ENCODE measurements at regions of chrX and their contacts with region 1.

Region 1: DNA sequence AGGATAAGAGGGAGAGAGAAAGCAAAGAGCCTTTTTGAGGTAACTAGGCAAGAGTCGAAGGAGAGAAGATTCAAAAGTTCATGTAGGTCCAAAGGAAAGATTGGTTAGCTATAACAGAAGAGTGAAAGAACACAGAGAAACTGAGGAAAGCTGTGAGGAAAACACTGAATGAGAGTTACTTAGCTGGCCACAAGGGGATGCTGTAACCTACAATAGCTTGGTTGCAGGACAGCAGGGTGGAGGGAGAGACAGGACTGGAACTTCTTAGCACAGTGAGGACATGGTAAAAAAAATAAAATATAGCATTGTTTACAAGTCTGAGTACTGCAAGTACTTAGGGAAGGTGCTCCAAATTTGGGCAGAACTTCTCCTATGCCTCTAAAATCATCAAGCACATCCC is 48.3 kb downstream of the RAI2 start:
- DNase-seq: no peak
- ATAC-seq: peak; percentile 59; the same call in 1 of the 2 replicates
- H3K4me3 Mint-ChIP-seq: no peak overlapping the region
- H3K27ac Mint-ChIP-seq: no peak overlapping the region
- H3K4me1 Mint-ChIP-seq: no peaks in the 10 kb centered on the region
- H3K27me3 Mint-ChIP-seq: no peaks in the 10 kb centered on the region
- CTCF ChIP-seq: peak; percentile 69

Region 2: DNA sequence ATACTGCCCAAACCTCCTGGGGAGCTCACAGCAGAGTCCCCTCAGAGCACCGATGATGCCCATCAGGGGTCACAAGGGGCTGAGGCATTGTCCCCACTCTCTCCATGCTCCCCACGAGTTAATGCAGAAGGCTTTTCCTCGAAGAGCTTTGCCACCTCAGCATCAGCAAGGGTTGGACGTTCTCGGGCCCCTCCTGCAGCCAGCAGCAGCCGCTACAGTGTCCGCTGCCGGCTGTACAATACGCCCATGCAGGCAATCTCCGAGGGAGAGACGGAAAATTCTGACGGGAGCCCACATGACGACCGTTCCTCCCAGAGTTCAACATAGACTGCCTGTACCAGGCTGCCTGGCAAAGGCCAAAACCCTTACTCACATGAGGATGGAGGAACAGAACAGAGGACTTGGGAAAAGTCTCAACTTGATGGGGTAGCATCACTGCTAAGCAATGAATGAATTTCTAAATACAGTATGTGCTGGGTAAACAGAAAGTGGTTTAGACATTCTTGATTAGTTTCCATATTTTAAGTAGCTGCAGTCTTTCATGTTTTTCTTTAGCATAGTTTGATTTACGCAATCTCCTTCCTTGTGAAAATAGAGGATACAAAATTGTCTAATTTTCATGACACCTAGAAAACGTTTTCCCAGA is 80.5 kb before region 1 on chrX:
- CTCF ChIA-PET with region 1: no interaction called
- POLR2A ChIA-PET with region 1: no interaction called
- DNase-seq: no peak
- ATAC-seq: no peak
- H3K4me3 Mint-ChIP-seq: no peak overlapping the region
- H3K27ac Mint-ChIP-seq: no peak overlapping the region
- H3K4me1 Mint-ChIP-seq: 0 out of 2 replicates have a peak, but pooled peaks cover 4% of the 10 kb centered on the region
- H3K27me3 Mint-ChIP-seq: no peaks in the 10 kb centered on the region; the same call in 1 of the 2 replicates
- CTCF ChIP-seq: no peak

Region 3: DNA sequence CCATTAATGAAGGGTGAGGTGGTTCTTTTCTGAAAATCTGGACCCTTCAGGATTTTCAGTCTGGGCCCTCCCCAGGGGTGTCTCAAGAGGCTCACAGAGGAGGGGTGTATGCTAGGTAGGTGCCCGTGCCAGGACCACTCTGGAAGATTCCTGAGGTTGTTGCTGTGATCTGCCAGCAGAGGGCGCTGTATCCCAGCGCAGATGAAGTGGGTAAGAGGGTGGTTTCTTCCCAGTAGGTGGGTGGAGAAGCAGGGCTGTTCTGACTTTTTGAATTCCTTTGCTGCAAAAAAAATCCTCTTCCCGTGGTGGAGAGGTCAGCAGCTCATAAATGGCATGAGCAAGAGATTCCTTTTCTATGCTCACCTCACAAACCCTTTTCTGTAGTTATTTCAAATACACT is 24.3 kb before region 1 on chrX:
- CTCF ChIA-PET with region 1: interaction called, 11 read pairs
- POLR2A ChIA-PET with region 1: no interaction called
- DNase-seq: peak; percentile 50
- ATAC-seq: peak; percentile 88
- H3K4me3 Mint-ChIP-seq: peak overlapping the region; percentile 37; the same call in 1 of the 2 replicates
- H3K27ac Mint-ChIP-seq: no peak overlapping the region
- H3K4me1 Mint-ChIP-seq: peaks cover 29% of the 10 kb centered on the region
- H3K27me3 Mint-ChIP-seq: peaks cover 4% of the 10 kb centered on the region; the same call in 1 of the 2 replicates
- CTCF ChIP-seq: peak; percentile 76

Region 4: GRCh38 chrX:17839269-17839668 is 26.5 kb after region 1 on chrX:
- CTCF ChIA-PET with region 1: interaction called, 10 read pairs
- POLR2A ChIA-PET with region 1: no interaction called
- DNase-seq: peak; percentile 16
- ATAC-seq: peak; percentile 44; the same call in 1 of the 2 replicates
- H3K4me3 Mint-ChIP-seq: no peak overlapping the region
- H3K27ac Mint-ChIP-seq: no peak overlapping the region
- H3K4me1 Mint-ChIP-seq: peaks cover 12% of the 10 kb centered on the region
- H3K27me3 Mint-ChIP-seq: no peaks in the 10 kb centered on the region
- CTCF ChIP-seq: no peak

Region 5: DNA sequence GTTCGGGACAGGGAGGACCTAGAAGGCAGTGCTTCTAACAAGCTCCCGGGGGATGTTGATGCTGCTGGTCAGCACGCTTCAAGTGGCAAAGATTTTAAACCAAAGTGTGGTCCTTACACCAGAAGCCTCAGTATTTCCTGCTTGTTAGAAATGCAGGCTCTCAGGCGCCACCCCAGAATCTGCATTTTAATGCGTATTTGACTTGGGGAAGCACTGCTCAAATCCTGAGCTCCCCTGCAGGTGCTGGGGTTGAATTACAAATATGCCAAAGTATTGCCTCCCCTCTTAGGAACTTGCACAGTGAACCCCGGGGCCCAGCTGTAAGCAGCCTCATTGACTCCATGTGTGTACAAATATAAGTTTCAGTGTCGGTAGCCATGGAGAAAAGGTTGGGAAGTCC is 119.1 kb after region 1 on chrX:
- CTCF ChIA-PET with region 1: interaction called, 11 read pairs
- POLR2A ChIA-PET with region 1: no interaction called
- DNase-seq: peak; percentile 16
- ATAC-seq: peak; percentile 46; the same call in 1 of the 2 replicates
- H3K4me3 Mint-ChIP-seq: no peak overlapping the region
- H3K27ac Mint-ChIP-seq: no peak overlapping the region
- H3K4me1 Mint-ChIP-seq: peaks cover 14% of the 10 kb centered on the region
- H3K27me3 Mint-ChIP-seq: no peaks in the 10 kb centered on the region; the same call in 1 of the 2 replicates
- CTCF ChIP-seq: no peak